ENCODE measurements at regions of chr15 and their contacts with region 1.

Region 1: GRCh38 chr15:58977887-58978286 is 9.6 kb upstream of the RNF111 start:
- DNase-seq: no peak
- ATAC-seq: no peak

Region 2: GRCh38 chr15:59399465-59400102 is 421.7 kb after region 1 on chr15:
- intact Hi-C with region 1: no loop called
- DNase-seq: no peak
- ATAC-seq: peak; percentile 63

Region 3: DNA sequence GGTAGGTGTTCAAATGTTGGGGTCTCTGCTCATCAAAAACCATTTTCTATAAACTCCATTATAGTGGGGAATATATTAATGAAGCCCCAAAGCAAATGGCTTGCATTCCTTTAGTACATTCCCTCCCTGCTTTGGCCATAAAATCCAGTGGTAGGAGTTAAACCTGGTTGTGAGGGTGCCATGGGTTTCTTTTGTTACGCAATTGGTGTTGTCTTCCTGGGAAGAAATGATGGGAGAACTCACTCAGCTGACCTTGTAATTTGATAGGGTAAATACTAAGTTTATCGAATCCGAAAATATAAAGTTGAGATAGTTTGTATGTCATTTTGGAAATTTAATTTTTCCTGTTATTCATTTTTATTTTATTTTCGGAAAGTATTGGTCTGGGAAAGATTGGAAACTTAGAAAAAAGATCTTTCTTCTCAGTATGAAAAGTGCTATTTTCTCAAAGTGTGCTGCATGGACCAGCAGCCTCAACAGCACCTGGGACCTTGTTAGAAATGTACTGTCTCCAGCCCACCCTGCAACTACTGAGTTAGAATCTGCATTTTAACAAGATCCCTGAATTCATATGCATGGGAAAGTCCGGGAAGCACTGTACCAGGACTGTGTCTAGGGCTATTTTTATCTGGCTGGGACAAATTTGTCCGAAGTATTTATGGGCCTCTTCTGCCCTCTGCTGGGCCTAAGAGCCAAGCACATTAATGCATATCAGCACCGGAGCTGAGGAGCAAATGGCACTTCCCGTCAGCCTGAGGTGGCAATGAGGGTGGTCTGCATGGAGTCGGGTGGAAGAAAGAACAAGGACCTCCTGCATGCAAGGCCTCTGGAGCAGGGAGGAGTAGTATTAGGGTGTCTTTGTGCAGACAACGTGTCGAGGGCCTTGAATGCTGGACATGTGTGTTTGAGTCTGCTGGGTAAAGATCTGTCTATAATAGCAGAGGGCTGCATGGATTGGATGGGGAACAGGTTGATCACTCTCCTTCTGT is 514.8 kb after region 1 on chr15:
- intact Hi-C with region 1: loop called (anchors 10 kb)
- DNase-seq: peak; percentile 75
- ATAC-seq: peak; percentile 96